Activated CD4-positive, alpha-beta T cell treated with anti-CD3 and anti-CD28 coated beads for 36 hours (primary cell): ENCODE measurements at regions of chr2 and their contacts with region 1.

Region 1: DNA sequence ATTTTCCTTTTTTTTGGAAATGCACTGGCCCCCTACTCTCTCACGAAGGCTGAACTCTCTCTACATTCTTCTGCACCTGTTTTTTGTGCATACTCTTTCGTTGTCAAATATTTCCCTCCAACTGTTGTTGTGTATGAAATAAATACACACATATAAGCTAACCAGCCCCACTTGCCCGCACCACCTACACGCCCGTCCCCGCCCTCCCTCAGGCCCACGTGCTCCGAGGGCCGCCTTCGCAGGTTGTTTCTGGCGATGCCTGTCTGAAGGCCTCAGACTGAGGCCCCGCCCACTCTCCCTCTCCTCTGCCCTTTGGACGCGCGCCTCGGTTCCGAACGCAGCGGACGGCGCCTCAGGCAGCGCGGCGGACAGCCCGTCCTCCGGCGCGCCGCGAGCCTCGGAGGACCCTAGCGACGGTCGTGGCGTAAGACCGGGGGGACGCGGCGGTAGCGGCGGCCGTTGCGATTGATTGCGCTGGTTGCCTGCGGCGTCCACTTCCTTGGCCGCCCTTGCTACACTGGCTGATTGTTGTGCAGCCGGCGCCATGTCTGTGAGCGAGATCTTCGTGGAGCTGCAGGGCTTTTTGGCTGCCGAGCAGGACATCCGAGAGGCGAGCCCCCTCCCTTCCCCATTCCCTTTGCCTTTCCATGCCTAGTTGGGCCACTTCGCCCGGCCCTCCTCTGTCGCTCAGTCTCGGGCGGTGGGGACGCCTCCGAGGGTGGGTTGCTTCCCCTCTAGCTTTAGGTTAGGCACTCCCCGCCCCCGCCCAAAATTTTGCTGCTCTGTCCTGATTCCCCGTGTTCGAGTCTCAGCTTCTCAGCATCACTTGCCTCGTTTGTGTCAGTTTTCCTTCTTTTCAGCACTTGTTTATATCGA is at the start of gene TSN:
- DNase-seq: peak; percentile 99
- ATAC-seq: peak; percentile 100
- H3K4me3 Mint-ChIP-seq: peak within 1 kb of the TSS; percentile 98
- H3K27ac Mint-ChIP-seq: peak within 1 kb of the TSS; percentile 93
- H3K4me1 Mint-ChIP-seq: peaks cover 30% of the 10 kb centered on the region
- H3K27me3 Mint-ChIP-seq: no peaks in the 10 kb centered on the region
- total RNA-seq, gene TSN: 44.0 to 71.2 TPM

Region 2: GRCh38 chr2:121076885-121077549 is 678.5 kb before region 1 on chr2:
- CTCF ChIA-PET with region 1: no interaction called
- POLR2A ChIA-PET with region 1: no interaction called
- intact Hi-C with region 1: loop called in 1 of 2 experiments (anchors 10 kb)
- DNase-seq: peak; percentile 87
- ATAC-seq: peak; percentile 60
- H3K4me3 Mint-ChIP-seq: no peak overlapping the region
- H3K27ac Mint-ChIP-seq: no peak overlapping the region
- H3K4me1 Mint-ChIP-seq: peaks cover 2% of the 10 kb centered on the region
- H3K27me3 Mint-ChIP-seq: peaks cover 23% of the 10 kb centered on the region

Region 3: DNA sequence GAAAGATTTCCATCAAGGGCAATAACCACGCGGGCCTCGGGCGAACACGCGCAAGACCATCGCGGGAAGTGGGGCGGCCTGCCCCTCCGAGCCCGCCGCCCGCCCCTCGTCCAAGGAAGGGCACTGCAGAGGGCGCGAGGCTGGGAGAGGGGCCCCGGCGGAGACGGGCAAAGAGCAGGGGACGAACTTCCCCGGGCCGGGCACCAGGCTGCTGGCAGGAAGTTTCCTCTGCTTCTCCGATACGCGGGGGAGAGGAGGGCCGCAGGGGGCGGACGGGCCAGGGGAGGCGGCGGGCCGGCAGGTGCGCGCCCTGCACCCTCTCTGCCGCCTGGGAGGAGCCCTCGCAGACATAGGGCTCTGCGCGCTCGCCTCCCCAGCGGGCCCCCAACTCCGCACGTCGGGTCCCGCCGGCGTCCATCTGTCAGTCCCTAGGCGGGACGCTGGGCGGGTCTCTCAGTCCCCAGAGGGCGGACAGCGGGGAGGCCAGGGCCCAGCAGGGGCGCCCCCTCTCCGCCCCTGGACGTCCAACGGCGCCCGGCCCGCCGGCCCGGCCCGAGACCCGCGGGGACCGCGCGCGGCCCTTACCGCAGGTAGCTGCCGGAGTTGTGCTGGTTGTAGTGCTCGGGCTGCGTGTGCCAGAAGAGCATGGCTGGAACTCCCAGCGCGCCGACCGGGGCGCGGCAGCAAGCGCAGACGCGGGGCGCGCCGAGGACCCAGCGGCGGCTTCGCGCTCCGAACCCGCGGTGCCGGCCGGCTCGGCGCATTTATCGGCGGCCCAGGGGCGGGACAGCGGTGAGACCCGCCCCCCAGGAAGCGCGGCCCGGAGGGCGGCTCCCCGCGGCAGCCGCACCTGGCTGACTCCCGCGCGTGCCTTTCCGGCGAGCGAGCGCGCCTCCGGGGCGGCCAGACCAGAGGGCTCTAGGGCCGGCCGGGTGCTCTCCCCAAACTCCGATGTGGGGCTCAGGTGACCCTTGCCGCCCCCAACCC is 470.7 kb before region 1 on chr2 and contains the start of gene TFCP2L1:
- CTCF ChIA-PET with region 1: no interaction called
- POLR2A ChIA-PET with region 1: no interaction called
- intact Hi-C with region 1: no loop called
- DNase-seq: peak; percentile 52
- ATAC-seq: peak; percentile 77
- H3K4me3 Mint-ChIP-seq: peak within 1 kb of the TSS; percentile 56
- H3K27ac Mint-ChIP-seq: no peak within 1 kb of the TSS
- H3K4me1 Mint-ChIP-seq: peaks cover 7% of the 10 kb centered on the region
- H3K27me3 Mint-ChIP-seq: peaks cover 39% of the 10 kb centered on the region
- total RNA-seq, gene TFCP2L1: 0.02 to 0.05 TPM

Region 4: DNA sequence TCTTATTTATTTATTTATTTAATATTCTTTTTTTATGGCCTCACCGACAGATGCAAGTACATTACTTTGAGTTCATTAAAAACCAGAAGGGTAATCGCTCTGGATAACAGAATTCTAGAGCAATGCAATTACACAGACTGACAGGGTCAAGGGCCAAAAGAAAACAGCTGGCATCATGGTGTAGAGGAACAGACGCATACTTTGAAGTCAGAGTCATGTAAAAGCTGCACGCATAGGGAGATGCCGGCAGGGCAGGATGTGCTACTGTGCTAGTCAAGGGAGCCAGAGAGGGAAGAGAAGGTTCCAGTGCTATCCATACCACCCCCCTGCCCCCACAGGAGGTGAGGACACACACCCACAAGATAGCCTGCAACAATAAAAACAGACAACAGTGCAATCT is 355.3 kb before region 1 on chr2:
- CTCF ChIA-PET with region 1: interaction called, 3 read pairs
- POLR2A ChIA-PET with region 1: no interaction called
- intact Hi-C with region 1: loop called in 1 of 2 experiments (anchors 2 kb)
- DNase-seq: no peak
- ATAC-seq: no peak
- H3K4me3 Mint-ChIP-seq: no peak overlapping the region
- H3K27ac Mint-ChIP-seq: no peak overlapping the region
- H3K4me1 Mint-ChIP-seq: peaks cover 2% of the 10 kb centered on the region
- H3K27me3 Mint-ChIP-seq: no peaks in the 10 kb centered on the region

Region 5: DNA sequence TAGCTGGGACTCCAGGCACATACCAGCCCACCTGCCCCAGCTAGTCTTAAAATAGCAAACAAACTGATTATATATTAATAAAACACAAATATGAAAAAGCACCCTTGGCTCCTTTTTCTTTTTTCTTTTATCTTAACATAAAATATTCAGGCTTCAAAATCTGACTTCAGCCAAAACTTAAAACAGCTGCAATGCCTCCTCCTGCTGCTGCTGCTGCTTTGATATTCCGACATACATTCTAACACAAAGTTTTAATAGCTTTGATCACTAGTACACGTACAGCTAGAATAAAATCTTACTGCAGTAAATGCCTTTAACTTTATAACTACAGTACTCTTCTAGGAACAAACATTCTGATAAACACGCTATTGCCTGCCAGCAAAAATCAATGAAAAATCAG is 296.2 kb before region 1 on chr2:
- CTCF ChIA-PET with region 1: no interaction called
- POLR2A ChIA-PET with region 1: no interaction called
- intact Hi-C with region 1: no loop called
- DNase-seq: no peak
- ATAC-seq: no peak
- H3K4me3 Mint-ChIP-seq: no peak overlapping the region
- H3K27ac Mint-ChIP-seq: no peak overlapping the region
- H3K4me1 Mint-ChIP-seq: no peaks in the 10 kb centered on the region
- H3K27me3 Mint-ChIP-seq: no peaks in the 10 kb centered on the region

Region 6: GRCh38 chr2:121626777-121627524 is 128.5 kb before region 1 on chr2:
- CTCF ChIA-PET with region 1: no interaction called
- POLR2A ChIA-PET with region 1: no interaction called
- intact Hi-C with region 1: no loop called
- DNase-seq: no peak
- ATAC-seq: no peak
- H3K4me3 Mint-ChIP-seq: no peak overlapping the region
- H3K27ac Mint-ChIP-seq: no peak overlapping the region
- H3K4me1 Mint-ChIP-seq: peaks cover 10% of the 10 kb centered on the region
- H3K27me3 Mint-ChIP-seq: no peaks in the 10 kb centered on the region

Region 7: GRCh38 chr2:121699421-121700333 is 55.8 kb before region 1 on chr2:
- CTCF ChIA-PET with region 1: no interaction called
- POLR2A ChIA-PET with region 1: interaction called, 4 read pairs
- intact Hi-C with region 1: loop called in 1 of 2 experiments (anchors 1 kb)
- DNase-seq: peak; percentile 95
- ATAC-seq: peak; percentile 98
- H3K4me3 Mint-ChIP-seq: peak overlapping the region; percentile 64
- H3K27ac Mint-ChIP-seq: peak overlapping the region; percentile 95
- H3K4me1 Mint-ChIP-seq: peaks cover 44% of the 10 kb centered on the region
- H3K27me3 Mint-ChIP-seq: no peaks in the 10 kb centered on the region

Region 8: GRCh38 chr2:121736462-121737341 is 18.8 kb before region 1 on chr2 and contains the start of gene NIFK:
- CTCF ChIA-PET with region 1: no interaction called
- POLR2A ChIA-PET with region 1: interaction called, 8 read pairs
- intact Hi-C with region 1: loop called (anchors 1 kb)
- DNase-seq: peak; percentile 100
- ATAC-seq: peak; percentile 91
- H3K4me3 Mint-ChIP-seq: peak within 1 kb of the TSS; percentile 83
- H3K27ac Mint-ChIP-seq: peak within 1 kb of the TSS; percentile 97
- H3K4me1 Mint-ChIP-seq: peaks cover 40% of the 10 kb centered on the region
- H3K27me3 Mint-ChIP-seq: no peaks in the 10 kb centered on the region
- total RNA-seq, gene NIFK: 148 to 213 TPM

Region 9: GRCh38 chr2:121790250-121790956 is 34.9 kb after region 1 on chr2:
- CTCF ChIA-PET with region 1: no interaction called
- POLR2A ChIA-PET with region 1: no interaction called
- intact Hi-C with region 1: no loop called
- DNase-seq: no peak
- ATAC-seq: peak; percentile 42
- H3K4me3 Mint-ChIP-seq: no peak overlapping the region
- H3K27ac Mint-ChIP-seq: no peak overlapping the region
- H3K4me1 Mint-ChIP-seq: no peaks in the 10 kb centered on the region
- H3K27me3 Mint-ChIP-seq: peaks cover 19% of the 10 kb centered on the region